Aorta (tissue), 5 donors: ENCODE measurements at regions of chr15 and their contacts with region 1.

Region 1: GRCh38 chr15:95162967-95163531 is 931.7 kb downstream of the MCTP2 start:
- DNase-seq: no peak
- ATAC-seq: peak; percentile 75
- H3K4me3 ChIP-seq: no peak overlapping the region
- H3K27ac ChIP-seq: peak overlapping the region in 1 of 2 donors; percentile 79
- H3K4me1 ChIP-seq: no peaks in the 10 kb centered on the region
- H3K27me3 ChIP-seq: no peaks in the 10 kb centered on the region

Region 2: DNA sequence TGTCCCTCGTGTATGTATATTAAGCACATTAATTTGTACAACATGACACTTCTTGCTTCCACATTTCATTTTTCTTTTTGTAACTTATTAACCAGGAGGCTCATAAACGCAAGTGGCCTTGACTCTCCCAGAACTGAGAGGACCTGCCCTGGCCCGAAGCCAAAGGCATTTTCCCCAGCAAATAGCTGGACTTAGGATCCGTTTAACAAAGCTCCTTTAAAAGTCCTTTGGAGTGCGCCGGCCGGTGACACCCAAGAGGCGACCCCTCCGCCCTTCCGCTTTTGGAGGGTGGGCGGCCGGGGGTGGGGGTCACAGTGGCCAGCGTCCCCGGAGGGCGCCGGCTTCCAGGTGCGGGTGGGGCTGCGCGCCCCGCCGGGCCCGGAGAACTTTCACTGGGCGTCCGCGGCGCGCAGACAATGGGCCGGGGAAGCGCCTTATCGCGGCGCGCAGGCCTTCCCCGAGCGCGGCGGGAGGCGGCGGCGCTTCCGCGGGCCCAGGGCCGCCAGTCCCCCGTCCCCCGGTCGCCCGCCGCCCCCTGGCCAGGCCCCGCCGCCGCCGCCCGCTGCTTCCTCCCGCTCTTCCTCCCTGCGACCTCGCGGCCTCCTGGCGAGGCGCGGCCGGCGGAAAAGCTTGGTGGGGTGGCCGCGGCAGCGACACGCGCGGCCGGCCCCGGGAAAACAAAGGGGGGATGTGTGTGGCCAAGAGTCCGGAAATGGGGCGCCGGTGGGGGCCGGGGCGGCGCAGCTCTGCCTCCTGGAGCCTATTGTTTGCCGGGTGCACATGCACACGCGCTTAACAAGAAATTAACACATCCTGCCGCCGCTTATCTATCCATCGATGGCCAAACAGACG is 318.3 kb before region 1 on chr15:
- intact Hi-C with region 1: loop called in 1 of 2 experiments (anchors 10 kb)
- DNase-seq: peak; percentile 62 to 88
- ATAC-seq: peak; percentile 75
- H3K4me3 ChIP-seq: peak overlapping the region; percentile 28 to 29
- H3K27ac ChIP-seq: peak overlapping the region; percentile 84 to 89
- H3K4me1 ChIP-seq: peaks cover 0 to 3% of the 10 kb centered on the region in 2 donors
- H3K27me3 ChIP-seq: no peaks in the 10 kb centered on the region

Region 3: GRCh38 chr15:95041299-95041698 is 121.8 kb before region 1 on chr15:
- intact Hi-C with region 1: loop called in 1 of 2 experiments (anchors 10 kb)
- DNase-seq: no peak
- ATAC-seq: no peak
- H3K4me3 ChIP-seq: no peak overlapping the region
- H3K27ac ChIP-seq: no peak overlapping the region
- H3K4me1 ChIP-seq: no peaks in the 10 kb centered on the region
- H3K27me3 ChIP-seq: no peaks in the 10 kb centered on the region

Region 4: DNA sequence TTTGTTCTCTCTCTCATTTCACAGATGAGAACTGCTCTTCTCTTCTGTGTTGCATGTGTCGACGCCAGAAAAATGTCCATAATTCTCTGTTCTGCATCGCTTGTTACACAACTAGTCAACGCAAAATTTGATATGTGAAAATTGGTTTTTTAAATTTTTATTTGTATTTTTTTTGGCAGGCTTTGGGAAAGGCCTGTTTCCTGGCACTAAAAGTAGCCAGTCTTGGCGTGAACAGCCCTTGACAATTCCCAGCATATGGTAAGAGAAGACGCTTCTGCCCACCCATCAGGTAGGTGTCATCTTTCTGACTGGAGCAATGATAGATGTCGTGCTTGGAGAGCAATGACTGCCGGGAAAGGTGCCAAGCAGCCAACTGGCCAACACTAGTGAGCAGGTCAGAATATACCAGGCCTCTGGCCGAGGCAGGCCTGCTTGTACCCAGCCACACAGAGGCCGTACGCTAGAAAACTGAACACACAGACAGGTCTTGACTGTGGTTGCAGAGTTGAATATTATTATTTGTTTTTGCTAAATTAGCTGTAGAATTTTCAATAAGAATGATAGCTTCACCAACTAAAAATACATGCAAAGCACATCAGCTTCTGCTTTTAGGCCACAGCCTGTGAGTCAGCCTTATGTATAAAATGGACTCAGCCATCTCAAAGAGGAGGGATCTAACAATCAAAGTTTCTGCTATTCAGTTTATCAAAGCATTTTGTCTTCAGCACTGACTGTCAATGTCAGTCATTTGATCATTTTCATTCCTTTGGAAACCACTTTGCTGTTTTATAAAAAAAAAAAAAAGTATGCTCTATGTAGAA is 94.1 kb before region 1 on chr15:
- intact Hi-C with region 1: loop called in 1 of 2 experiments (anchors 10 kb)
- DNase-seq: no peak
- ATAC-seq: no peak
- H3K4me3 ChIP-seq: no peak overlapping the region
- H3K27ac ChIP-seq: peak overlapping the region in 1 of 2 donors; percentile 81
- H3K4me1 ChIP-seq: peaks cover 3 to 4% of the 10 kb centered on the region in 2 donors
- H3K27me3 ChIP-seq: no peaks in the 10 kb centered on the region

Region 5: DNA sequence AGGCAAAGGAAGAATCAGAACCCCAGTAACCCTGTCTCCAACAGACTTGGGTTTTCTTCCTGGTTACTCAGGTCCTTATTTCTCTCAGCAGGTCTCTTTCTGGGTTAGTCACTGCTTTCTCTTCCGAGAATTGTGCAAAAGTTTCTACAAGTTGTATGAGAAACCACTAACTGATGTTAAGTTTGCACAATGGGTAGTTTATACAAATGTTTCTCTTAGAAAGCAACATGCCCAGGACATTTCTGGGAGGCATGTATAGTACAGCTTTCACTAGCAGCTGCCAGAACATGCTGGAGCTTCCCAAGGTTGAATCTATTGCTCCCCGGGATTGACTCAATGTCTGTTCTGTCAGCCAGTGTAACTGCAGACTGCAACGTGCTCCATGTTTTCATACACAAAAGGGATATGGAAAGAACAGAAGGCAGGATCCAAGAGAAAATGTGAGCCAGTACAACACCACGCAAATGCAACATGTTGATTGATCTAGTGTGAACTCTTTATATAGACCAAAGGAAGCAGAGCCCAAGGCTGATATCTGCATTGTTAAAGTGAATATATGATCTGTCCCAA is 43.9 kb before region 1 on chr15:
- intact Hi-C with region 1: no loop called
- DNase-seq: no peak
- ATAC-seq: no peak
- H3K4me3 ChIP-seq: no peak overlapping the region
- H3K27ac ChIP-seq: no peak overlapping the region
- H3K4me1 ChIP-seq: no peaks in the 10 kb centered on the region
- H3K27me3 ChIP-seq: no peaks in the 10 kb centered on the region

Region 6: DNA sequence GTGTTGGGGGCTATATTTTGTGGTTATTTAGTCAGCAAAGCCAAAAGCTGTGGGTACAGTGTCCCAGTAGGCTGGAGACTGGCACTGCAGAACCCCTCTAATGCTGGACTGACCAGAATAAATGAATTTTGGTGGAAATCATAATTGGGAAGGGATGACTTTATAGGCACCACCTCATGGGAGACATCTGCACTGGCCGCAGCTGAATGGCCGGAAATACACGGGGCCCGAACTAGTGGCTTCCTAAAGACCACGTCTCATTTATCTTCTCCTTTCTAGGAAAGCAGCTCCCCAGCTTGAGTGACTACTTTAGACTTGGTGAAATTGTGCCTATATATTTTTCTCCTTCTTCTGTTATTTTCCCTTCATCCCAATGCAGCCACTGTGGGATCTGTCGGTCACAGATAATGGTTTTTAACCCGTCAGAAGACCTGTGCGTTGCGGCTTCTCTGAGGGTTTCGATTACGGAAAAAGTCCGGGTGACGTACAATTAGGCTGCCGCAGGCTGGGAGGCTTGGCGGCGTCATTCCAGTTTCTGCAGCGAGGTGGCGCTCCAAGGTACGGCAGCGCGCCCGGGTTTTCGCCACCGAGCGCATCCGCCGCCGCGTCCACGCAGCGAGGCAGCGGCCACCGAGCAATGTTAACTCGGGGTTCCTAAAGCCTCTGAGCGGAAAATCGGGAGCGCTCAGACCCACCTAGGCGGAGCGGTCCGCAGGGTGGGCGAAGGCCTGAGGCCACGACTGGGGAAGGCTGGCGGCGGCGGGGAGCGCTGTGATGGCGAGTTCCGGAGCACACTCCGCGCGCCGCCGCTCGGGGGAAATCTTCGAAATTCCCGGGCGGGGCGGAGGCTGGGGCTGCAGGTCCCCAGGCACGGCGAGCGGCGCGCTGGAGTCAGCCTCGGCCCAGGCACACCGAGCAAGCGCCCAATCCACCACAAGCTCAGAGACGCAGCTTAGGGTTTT is 1193.7 kb after region 1 on chr15:
- intact Hi-C with region 1: loop called in 1 of 2 experiments (anchors 10 kb)
- DNase-seq: peak; percentile 81 to 96
- ATAC-seq: peak; percentile 80
- H3K4me3 ChIP-seq: peak overlapping the region; percentile 62 to 66
- H3K27ac ChIP-seq: no peak overlapping the region
- H3K4me1 ChIP-seq: no peaks in the 10 kb centered on the region
- H3K27me3 ChIP-seq: no peaks in the 10 kb centered on the region